ENCODE measurements at regions of chr2 and their contacts with region 1.

Region 1: DNA sequence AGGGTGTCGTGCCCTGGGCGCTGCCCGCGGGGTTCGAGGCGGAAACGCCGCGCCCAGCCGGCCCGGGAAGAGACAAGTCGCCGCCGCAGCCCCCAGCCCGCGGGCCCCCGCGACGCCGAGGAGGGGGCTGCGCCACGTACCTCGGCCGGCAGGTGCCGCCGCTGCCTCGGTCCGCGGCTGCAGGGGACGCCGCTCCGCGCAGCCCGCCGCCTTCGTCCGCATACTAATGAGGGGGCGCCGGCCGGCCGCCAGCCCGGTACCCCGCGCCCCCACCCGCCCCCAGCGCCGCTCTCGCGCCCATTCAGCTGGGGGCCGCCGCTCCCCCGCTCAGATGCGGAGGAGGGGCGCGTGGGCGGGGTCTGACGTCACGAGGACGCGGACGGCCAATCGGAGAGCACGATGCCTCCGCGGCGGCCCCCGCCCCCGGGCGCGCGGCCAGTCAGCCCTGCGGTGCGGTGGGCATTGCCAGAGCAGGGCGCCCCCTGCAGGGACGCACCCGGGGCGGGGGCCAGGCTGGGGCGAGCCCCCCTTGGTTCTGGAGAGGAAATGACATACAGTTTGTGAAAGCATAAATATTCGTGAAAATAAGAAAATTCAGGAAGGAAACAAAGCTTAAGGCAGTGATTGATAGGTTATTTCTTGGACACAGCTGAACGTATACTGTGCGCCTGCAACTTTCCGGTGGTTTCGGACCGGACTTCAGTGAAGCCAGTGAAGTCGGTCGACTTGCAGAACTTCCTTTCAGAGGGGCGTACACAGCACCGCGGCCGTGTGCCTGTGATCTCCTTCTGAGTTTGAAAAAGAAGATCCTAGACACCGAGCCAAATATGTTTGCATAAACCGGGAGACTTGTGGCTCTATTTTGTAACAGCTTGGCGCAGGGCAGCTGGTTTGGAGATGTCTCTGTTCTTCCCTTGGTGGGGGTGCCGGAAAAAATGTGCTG is at the start of gene ST3GAL5:
- DNase-seq: peak; percentile 81 to 92
- ATAC-seq: peak; percentile 74 to 84
- H3K4me3 ChIP-seq: peak within 1 kb of the TSS; percentile 77
- H3K27ac ChIP-seq: peak within 1 kb of the TSS; percentile 88 to 97
- H3K4me1 ChIP-seq: peaks cover 67% of the 10 kb centered on the region
- CTCF ChIP-seq: peak; percentile 97
- EP300 ChIP-seq: peak in 1 of 2 experiments; percentile 28; a peak in 1 of 5 replicates
- POLR2A ChIP-seq: peak; percentile 22
- RAD21 ChIP-seq: peak; percentile 55 to 81
- polyA plus RNA-seq, gene ST3GAL5: 115 and 119 TPM in 2 replicates

Region 2: GRCh38 chr2:85865539-85866164 is 23.3 kb before region 1 on chr2:
- CTCF ChIA-PET with region 1: interaction called, 38 read pairs
- POLR2A ChIA-PET with region 1: no interaction called
- DNase-seq: no peak
- ATAC-seq: peak in 1 of 2 experiments; percentile 13; a peak in 1 of 6 replicates
- H3K4me3 ChIP-seq: no peak overlapping the region
- H3K27ac ChIP-seq: no peak overlapping the region
- H3K4me1 ChIP-seq: no peaks in the 10 kb centered on the region
- CTCF ChIP-seq: no peak
- EP300 ChIP-seq: no peak
- POLR2A ChIP-seq: no peak
- RAD21 ChIP-seq: no peak

Region 3: DNA sequence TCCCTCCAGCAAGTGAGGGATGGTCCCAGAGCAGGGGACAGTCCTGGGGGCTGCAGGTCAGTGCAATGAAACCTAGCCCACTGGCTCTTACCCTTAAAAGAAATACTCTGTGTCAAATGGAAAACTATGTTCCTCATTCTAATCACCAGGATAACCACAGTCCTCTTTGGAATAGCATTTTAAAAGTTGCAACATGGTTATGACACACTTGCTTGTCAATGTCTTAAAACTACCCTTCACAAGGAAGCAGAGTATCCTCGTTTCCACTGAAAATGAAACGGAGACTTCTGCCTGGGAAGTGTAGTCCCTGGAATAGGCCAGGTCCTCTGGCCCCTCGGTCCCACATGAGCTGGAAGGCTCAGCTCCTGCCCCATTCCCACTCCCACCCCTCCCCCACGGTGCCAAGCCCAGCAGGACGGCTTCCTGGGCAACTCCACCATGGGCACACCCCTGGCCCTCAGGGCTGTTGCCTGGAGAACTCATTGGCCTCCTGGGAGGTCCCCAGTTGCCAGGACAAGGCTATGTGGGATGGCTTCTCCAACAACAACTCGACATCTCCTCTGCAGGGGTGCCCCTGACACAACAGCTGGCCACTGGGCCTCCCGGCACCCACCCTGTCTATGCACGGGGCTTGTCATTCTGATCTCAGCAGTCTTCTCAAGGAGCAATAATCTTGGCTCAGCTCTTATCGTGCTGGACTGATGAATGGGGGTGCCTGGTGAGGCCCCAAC is 38.1 kb after region 1 on chr2:
- CTCF ChIA-PET with region 1: interaction called, 95 read pairs
- POLR2A ChIA-PET with region 1: no interaction called
- DNase-seq: no peak
- ATAC-seq: peak; percentile 15 to 17; a peak in 3 of 6 replicates
- H3K4me3 ChIP-seq: no peak overlapping the region
- H3K27ac ChIP-seq: peak overlapping the region; percentile 69 to 82
- H3K4me1 ChIP-seq: peaks cover 73% of the 10 kb centered on the region
- CTCF ChIP-seq: no peak
- EP300 ChIP-seq: no peak
- POLR2A ChIP-seq: no peak
- RAD21 ChIP-seq: no peak; a peak in 1 of 5 replicates

Region 4: GRCh38 chr2:85981579-85982247 is 92.8 kb after region 1 on chr2:
- CTCF ChIA-PET with region 1: interaction called, 12 read pairs
- POLR2A ChIA-PET with region 1: no interaction called
- DNase-seq: no peak
- ATAC-seq: no peak
- H3K4me3 ChIP-seq: no peak overlapping the region
- H3K27ac ChIP-seq: no peak overlapping the region
- H3K4me1 ChIP-seq: peaks cover 15% of the 10 kb centered on the region
- CTCF ChIP-seq: no peak
- EP300 ChIP-seq: no peak
- POLR2A ChIP-seq: no peak
- RAD21 ChIP-seq: no peak

Region 5: DNA sequence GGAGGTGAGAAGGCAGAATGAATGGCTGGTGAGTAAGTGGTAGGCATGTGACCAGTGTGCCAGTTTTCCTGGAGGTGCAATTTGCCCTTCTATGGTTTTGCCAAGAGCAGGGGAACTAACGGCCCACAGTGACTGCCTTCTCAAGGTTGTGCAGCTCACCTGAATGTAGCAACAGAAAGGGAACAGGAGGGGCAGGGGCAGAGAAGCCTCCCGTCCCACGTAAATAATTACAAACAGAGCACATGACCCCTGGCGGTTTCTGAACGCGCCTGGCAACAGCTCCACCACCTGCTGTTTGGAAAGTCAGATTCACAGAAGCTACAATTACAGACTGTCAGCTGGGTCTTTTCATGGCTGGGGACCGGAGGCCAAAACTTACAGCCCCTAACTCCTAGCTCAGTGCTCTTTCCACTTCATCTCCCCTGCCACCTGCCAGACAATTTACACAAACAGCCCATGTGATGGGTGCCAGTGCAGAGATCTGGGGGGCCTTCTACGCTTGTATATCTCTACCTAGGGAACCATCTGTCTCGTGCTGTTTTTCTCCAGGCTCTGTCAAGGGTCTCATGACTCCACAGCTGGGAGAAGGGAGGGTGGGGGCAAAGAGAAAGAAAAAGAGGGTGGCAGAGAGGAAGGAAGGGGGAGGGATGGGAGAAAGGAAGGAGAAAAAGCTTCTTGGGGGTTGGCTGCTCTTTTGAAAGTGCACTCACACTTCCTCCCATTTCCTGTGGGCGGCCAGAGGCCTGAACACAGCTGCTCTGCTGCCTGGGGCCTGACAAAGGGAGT is 147.1 kb after region 1 on chr2:
- CTCF ChIA-PET with region 1: interaction called, 40 read pairs
- POLR2A ChIA-PET with region 1: no interaction called
- DNase-seq: no peak
- ATAC-seq: peak; percentile 58 to 66; a peak in 4 of 6 replicates
- H3K4me3 ChIP-seq: no peak overlapping the region
- H3K27ac ChIP-seq: peak overlapping the region; percentile 28 to 64; a peak in 4 of 6 replicates
- H3K4me1 ChIP-seq: peaks cover 15% of the 10 kb centered on the region; the same call in 2 of the 3 replicates
- CTCF ChIP-seq: no peak
- EP300 ChIP-seq: no peak
- POLR2A ChIP-seq: no peak
- RAD21 ChIP-seq: peak in 1 of 2 experiments; percentile 15; a peak in 2 of 5 replicates

Region 6: DNA sequence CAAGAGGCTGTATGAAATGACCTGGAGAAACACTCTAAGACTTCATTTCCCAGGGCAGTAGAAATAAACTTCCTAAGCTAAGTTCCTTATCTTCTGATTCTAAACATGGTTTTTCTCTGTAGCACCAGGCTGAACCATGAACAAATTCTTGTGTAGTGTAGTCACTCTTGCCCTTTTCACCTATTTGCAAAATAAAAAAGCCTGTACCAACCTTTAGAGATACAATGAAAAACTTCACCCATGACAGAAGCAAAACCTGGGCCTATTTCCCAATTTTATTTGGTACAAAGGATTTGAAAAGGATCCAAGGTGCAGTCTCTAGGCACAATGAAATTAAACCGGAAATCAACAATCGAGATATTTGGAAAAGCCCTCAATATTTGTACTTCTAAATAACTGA is 173.1 kb after region 1 on chr2:
- CTCF ChIA-PET with region 1: interaction called, 69 read pairs
- POLR2A ChIA-PET with region 1: no interaction called
- DNase-seq: peak; percentile 21 to 65
- ATAC-seq: peak; percentile 78 to 86; a peak in 5 of 6 replicates
- H3K4me3 ChIP-seq: no peak overlapping the region
- H3K27ac ChIP-seq: peak overlapping the region; percentile 67 to 80
- H3K4me1 ChIP-seq: peaks cover 31% of the 10 kb centered on the region
- CTCF ChIP-seq: no peak
- EP300 ChIP-seq: 0 out of 5 replicates have a peak, but pooled peaks of 1 of the 2 experiments have one; percentile 28
- POLR2A ChIP-seq: no peak
- RAD21 ChIP-seq: 0 out of 5 replicates have a peak, but pooled peaks of 1 of the 2 experiments have one; percentile 26

Measured in A549 (cell line).